WTC11 (cell line): ENCODE measurements at regions of chr22 and their contacts with region 1.

Region 1: GRCh38 chr22:42169055-42169469 is 38.5 kb upstream of the CYP2D6 start:
- DNase-seq: peak; percentile 90
- ATAC-seq: peak; percentile 92
- H3K4me3 Mint-ChIP-seq: no peak overlapping the region
- H3K27ac Mint-ChIP-seq: 0 out of 2 replicates have a peak overlapping the region, but pooled peaks have one; percentile 47
- H3K4me1 Mint-ChIP-seq: peaks cover 35% of the 10 kb centered on the region
- H3K27me3 Mint-ChIP-seq: no peaks in the 10 kb centered on the region
- CTCF ChIP-seq: peak; percentile 85

Region 2: GRCh38 chr22:42300259-42301076 is 131.4 kb after region 1 on chr22:
- CTCF ChIA-PET with region 1: interaction called, 10 read pairs
- POLR2A ChIA-PET with region 1: no interaction called
- DNase-seq: no peak
- ATAC-seq: peak; percentile 49
- H3K4me3 Mint-ChIP-seq: peak overlapping the region; percentile 56
- H3K27ac Mint-ChIP-seq: peak overlapping the region; percentile 68; the same call in 1 of the 2 replicates
- H3K4me1 Mint-ChIP-seq: peaks cover 77% of the 10 kb centered on the region
- H3K27me3 Mint-ChIP-seq: peaks cover 23% of the 10 kb centered on the region
- CTCF ChIP-seq: no peak